Posterior cingulate gyrus (tissue), 11 donors: ENCODE measurements at regions of chr10 and their contacts with region 1.

Region 1: GRCh38 chr10:67779465-67780203 is 58.4 kb downstream of the DNAJC12 start:
- DNase-seq: peak in 6 of 10 donors; percentile 41 to 84 (median 68)

Region 2: GRCh38 chr10:67666416-67667034 is 113.1 kb before region 1 on chr10:
- intact Hi-C with region 1: loop called (anchors 1 kb)
- DNase-seq: no peak

Region 3: DNA sequence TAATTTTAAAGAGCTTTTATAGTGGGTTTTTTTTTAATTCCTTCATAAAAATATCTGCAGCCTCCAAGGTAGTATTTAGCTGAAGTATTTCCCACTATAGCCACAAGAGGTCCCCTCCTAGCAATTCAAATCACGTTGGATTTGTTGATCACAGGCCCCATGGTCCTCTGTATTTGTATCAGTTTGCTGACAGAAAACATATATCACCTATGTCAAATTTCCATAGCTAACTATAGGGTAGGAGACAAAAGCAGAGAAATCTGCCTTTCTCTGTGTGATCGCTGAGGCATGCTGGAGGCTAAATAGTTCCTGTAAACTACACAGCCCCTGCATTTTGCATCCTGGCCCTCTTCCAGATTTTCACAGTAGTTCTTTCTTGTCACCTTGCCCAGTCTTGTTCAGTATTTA is 81.9 kb before region 1 on chr10:
- intact Hi-C with region 1: loop called (anchors 2 kb)
- DNase-seq: no peak